ENCODE measurements at regions of chr5 and their contacts with region 1.

Region 1: DNA sequence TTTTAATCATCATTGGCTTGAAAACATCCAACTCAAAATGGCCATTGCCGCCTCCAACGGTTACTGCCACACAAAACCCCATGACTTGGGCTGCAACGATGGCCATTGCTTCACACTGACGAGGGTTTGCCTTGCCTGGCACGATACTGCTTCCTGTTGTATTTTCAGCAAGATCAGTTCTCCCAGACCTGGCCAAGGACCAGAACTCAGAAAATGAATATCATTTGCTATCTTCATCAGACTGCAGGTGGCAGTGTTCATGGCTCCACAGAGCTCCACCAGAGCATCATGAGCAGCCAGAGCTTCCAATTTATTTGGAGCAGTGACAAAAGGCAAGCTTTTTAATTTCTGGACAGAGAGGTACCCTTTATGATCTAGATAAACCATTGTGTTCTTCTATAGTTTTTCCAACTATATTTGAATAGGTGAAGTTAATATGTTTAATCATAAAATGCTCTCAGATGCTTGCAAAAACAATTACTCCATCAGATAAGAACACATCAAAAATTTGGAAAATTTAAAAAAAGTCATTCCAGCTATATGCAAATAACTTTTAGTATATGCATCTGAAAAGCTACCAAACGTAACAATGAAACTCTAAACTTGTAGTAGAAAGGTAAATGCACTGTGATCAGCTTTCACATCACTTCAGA is 10.4 kb downstream of the AMACR start:
- DNase-seq: no peak
- H3K4me3 ChIP-seq: no peak overlapping the region
- H3K27ac ChIP-seq: no peak overlapping the region
- H3K4me1 ChIP-seq: peaks cover 0 to 3% (median 1%) of the 10 kb centered on the region in 4 experiments; a peak in 2 of 7 replicates
- H3K27me3 ChIP-seq: no peaks in the 10 kb centered on the region
- CTCF ChIP-seq: peak; percentile 1 to 69 (median 61)
- EP300 ChIP-seq: no peak
- POLR2A ChIP-seq: no peak
- RAD21 ChIP-seq: peak; percentile 63 to 74

Region 2: GRCh38 chr5:33901156-33901555 is 96.3 kb before region 1 on chr5:
- CTCF ChIA-PET with region 1: no interaction called
- POLR2A ChIA-PET with region 1: no interaction called
- DNase-seq: no peak
- H3K4me3 ChIP-seq: no peak overlapping the region
- H3K27ac ChIP-seq: no peak overlapping the region
- H3K4me1 ChIP-seq: no peaks in the 10 kb centered on the region
- H3K27me3 ChIP-seq: no peaks in the 10 kb centered on the region
- CTCF ChIP-seq: no peak
- EP300 ChIP-seq: no peak
- POLR2A ChIP-seq: no peak
- RAD21 ChIP-seq: no peak

Region 3: GRCh38 chr5:33981408-33982162 is 15.9 kb before region 1 on chr5:
- CTCF ChIA-PET with region 1: interaction called, 22 read pairs
- POLR2A ChIA-PET with region 1: interaction called, 5 read pairs
- DNase-seq: no peak
- H3K4me3 ChIP-seq: no peak overlapping the region
- H3K27ac ChIP-seq: no peak overlapping the region
- H3K4me1 ChIP-seq: peaks cover 0 to 15% (median 3%) of the 10 kb centered on the region in 4 experiments; a peak in 2 of 7 replicates
- H3K27me3 ChIP-seq: no peaks in the 10 kb centered on the region
- CTCF ChIP-seq: no peak
- EP300 ChIP-seq: no peak
- POLR2A ChIP-seq: no peak
- RAD21 ChIP-seq: no peak

Region 4: DNA sequence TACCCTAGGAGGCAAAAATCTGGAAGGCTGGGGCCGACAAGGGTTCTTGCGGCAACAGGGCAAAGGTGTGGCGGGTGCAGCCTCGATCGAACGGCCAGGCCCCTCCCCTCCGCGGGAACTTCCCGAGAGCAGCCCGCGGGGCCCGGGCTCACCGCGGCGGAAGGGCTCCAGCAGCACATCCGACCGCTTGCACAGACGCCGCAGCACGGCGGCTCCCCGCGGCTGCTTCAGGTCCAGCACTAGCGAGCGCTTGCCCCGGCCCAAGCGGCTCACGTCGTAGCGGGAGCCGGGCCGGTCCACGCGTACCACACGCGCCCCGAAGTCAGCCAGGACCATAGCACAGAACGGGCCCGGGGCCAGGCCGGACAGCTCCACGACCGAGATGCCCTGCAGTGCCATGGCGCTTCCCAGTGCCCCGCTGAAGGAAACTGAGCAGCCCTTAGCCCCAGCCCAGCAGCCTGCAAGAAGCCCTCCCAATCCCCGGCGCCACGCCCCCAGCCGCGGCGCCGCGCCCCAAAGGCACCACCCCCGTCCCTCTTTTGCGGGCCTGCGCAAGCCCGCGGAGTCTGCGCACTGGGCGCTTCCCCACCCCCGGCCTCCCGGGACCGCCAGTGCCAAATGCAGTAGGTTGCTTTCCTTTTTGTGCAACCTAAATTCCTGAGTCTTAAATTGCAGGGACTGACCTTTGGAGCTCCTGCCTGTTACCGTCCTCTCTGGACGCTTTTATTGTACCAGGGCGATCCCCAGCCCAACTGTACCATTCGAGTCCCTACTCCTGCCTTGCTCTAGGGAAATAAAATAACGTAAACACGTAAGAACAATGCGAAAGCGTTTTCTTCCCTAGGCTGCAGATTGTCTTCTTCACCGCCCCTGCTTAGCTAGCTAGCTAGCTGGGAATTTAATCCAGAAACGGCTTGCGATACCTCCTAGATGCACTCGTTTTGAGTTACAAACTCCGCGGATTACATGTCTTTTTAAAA is 10.5 kb after region 1 on chr5 and contains the start of gene AMACR:
- CTCF ChIA-PET with region 1: interaction called, 11 read pairs
- POLR2A ChIA-PET with region 1: interaction called, 7 read pairs
- DNase-seq: peak; percentile 78 to 87
- H3K4me3 ChIP-seq: peak within 1 kb of the TSS; percentile 65 to 89 (median 78)
- H3K27ac ChIP-seq: peak within 1 kb of the TSS; percentile 81
- H3K4me1 ChIP-seq: peaks cover 0 to 4% (median 2%) of the 10 kb centered on the region in 4 experiments; a peak in 4 of 7 replicates
- H3K27me3 ChIP-seq: no peaks in the 10 kb centered on the region
- CTCF ChIP-seq: no peak
- EP300 ChIP-seq: no peak
- POLR2A ChIP-seq: peak; percentile 62 to 91
- RAD21 ChIP-seq: peak in 1 of 2 experiments; percentile 2; a peak in 2 of 4 replicates
- total RNA-seq, gene AMACR: 10.1 and 12.6 TPM in 2 replicates

Region 5: GRCh38 chr5:34047774-34048572 is 50.5 kb after region 1 on chr5:
- CTCF ChIA-PET with region 1: interaction called, 10 read pairs
- POLR2A ChIA-PET with region 1: no interaction called
- DNase-seq: no peak
- H3K4me3 ChIP-seq: no peak overlapping the region
- H3K27ac ChIP-seq: no peak overlapping the region
- H3K4me1 ChIP-seq: no peaks in the 10 kb centered on the region; a peak in 1 of 7 replicates
- H3K27me3 ChIP-seq: no peaks in the 10 kb centered on the region
- CTCF ChIP-seq: no peak
- EP300 ChIP-seq: no peak
- POLR2A ChIP-seq: no peak
- RAD21 ChIP-seq: no peak

Region 6: GRCh38 chr5:35117967-35118366 is 1120.5 kb after region 1 on chr5:
- CTCF ChIA-PET with region 1: no interaction called
- POLR2A ChIA-PET with region 1: no interaction called
- DNase-seq: no peak
- H3K4me3 ChIP-seq: no peak overlapping the region
- H3K27ac ChIP-seq: no peak overlapping the region
- H3K4me1 ChIP-seq: no peaks in the 10 kb centered on the region
- H3K27me3 ChIP-seq: no peaks in the 10 kb centered on the region
- CTCF ChIP-seq: no peak
- EP300 ChIP-seq: no peak
- POLR2A ChIP-seq: no peak
- RAD21 ChIP-seq: no peak